ENCODE measurements at regions of chr2 and their contacts with region 1.

Region 1: GRCh38 chr2:27032495-27033252 is at the start of gene TMEM214:
- H3K4me3 Mint-ChIP-seq: peak within 1 kb of the TSS; percentile 88
- H3K27ac Mint-ChIP-seq: peak within 1 kb of the TSS; percentile 88
- H3K4me1 Mint-ChIP-seq: peaks cover 34% of the 10 kb centered on the region
- H3K27me3 Mint-ChIP-seq: no peaks in the 10 kb centered on the region

Region 2: DNA sequence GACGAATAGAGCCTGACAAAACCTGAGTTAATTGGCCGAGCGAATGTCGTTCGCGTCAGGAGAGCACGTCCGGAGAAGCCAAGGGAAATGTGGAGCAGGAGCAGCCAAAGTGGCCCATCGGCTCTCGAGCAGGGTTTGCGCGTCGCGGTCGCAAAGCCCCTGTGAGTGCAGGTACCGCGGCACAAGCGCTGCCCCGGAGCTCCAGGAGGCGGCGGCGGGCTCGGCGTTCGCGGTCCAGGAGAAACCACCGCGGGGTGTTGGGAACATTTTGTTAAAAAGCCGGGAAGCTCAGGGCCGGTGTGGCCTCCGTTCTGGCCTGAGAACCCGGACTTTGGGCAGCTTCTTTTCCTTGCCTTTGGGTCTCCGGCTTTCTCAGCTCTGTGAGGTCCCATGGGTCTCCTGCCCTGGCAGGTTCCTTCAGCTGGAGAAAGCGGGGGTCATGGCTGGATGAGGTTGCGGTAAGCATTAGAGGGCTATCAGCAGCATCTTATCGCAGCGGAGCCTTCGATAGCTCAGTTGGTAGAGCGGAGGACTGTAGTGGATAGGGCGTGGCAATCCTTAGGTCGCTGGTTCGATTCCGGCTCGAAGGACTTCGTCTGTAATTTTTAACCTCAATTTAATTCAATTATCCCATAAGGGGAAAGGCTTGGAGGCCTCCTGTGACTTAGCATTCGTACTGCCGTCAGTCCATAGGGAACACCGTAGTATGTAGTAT is 17.8 kb after region 1 on chr2:
- intact Hi-C with region 1: loop called (anchors 1 kb)
- H3K4me3 Mint-ChIP-seq: peak overlapping the region; percentile 91
- H3K27ac Mint-ChIP-seq: peak overlapping the region; percentile 80
- H3K4me1 Mint-ChIP-seq: peaks cover 27% of the 10 kb centered on the region
- H3K27me3 Mint-ChIP-seq: peaks cover 6% of the 10 kb centered on the region

Region 3: GRCh38 chr2:27071277-27071989 is 38.8 kb after region 1 on chr2 and contains the start of gene OST4:
- intact Hi-C with region 1: loop called (anchors 5 kb)
- H3K4me3 Mint-ChIP-seq: peak within 1 kb of the TSS; percentile 91
- H3K27ac Mint-ChIP-seq: peak within 1 kb of the TSS; percentile 86
- H3K4me1 Mint-ChIP-seq: peaks cover 70% of the 10 kb centered on the region
- H3K27me3 Mint-ChIP-seq: no peaks in the 10 kb centered on the region

Measured in dendritic cell treated with granulocyte-macrophage colony-stimulating factor and Interleukin-4, amounts not matched to agents 40 ng/mL and 50 ng/mL, for 4 days (primary cell).